Ascending aorta (tissue), 2 donors: ENCODE measurements at regions of chr9 and their contacts with region 1.

Region 1: GRCh38 chr9:34178520-34179212 is at the start of gene UBAP1:
- DNase-seq: peak; percentile 92 to 99
- H3K4me3 ChIP-seq: peak within 1 kb of the TSS; percentile 82 to 83
- H3K27ac ChIP-seq: peak within 1 kb of the TSS; percentile 96 to 97
- H3K4me1 ChIP-seq: peaks cover 0 to 3% of the 10 kb centered on the region in 2 donors
- H3K27me3 ChIP-seq: no peaks in the 10 kb centered on the region
- CTCF ChIP-seq: peak in 1 of 3 experiments; percentile 5
- total RNA-seq, gene UBAP1: 26.0 TPM

Region 2: GRCh38 chr9:33816327-33817252 is 362.1 kb before region 1 on chr9 and contains the start of gene UBE2R2:
- intact Hi-C with region 1: loop called (anchors 10 kb)
- DNase-seq: peak; percentile 68 to 95
- H3K4me3 ChIP-seq: peak within 1 kb of the TSS; percentile 85 to 95
- H3K27ac ChIP-seq: peak within 1 kb of the TSS; percentile 99 to 100
- H3K4me1 ChIP-seq: peaks cover 0 to 25% of the 10 kb centered on the region in 2 donors
- H3K27me3 ChIP-seq: no peaks in the 10 kb centered on the region
- CTCF ChIP-seq: no peak
- total RNA-seq, gene UBE2R2: 7.2 TPM

Region 3: GRCh38 chr9:33988219-33988890 is 190.3 kb before region 1 on chr9:
- intact Hi-C with region 1: no loop called
- DNase-seq: no peak
- H3K4me3 ChIP-seq: no peak overlapping the region
- H3K27ac ChIP-seq: no peak overlapping the region
- H3K4me1 ChIP-seq: no peaks in the 10 kb centered on the region
- H3K27me3 ChIP-seq: no peaks in the 10 kb centered on the region
- CTCF ChIP-seq: no peak

Region 4: GRCh38 chr9:34126207-34127034 is 52.2 kb before region 1 on chr9 and contains the start of gene DCAF12:
- intact Hi-C with region 1: loop called (anchors 2 kb)
- DNase-seq: peak; percentile 31 to 93
- H3K4me3 ChIP-seq: peak within 1 kb of the TSS; percentile 61 to 85
- H3K27ac ChIP-seq: peak within 1 kb of the TSS; percentile 90 to 95
- H3K4me1 ChIP-seq: peaks cover 9 to 12% of the 10 kb centered on the region in 2 donors
- H3K27me3 ChIP-seq: no peaks in the 10 kb centered on the region
- CTCF ChIP-seq: peak in 1 of 3 experiments; percentile 22
- total RNA-seq, gene DCAF12: 27.5 TPM

Region 5: DNA sequence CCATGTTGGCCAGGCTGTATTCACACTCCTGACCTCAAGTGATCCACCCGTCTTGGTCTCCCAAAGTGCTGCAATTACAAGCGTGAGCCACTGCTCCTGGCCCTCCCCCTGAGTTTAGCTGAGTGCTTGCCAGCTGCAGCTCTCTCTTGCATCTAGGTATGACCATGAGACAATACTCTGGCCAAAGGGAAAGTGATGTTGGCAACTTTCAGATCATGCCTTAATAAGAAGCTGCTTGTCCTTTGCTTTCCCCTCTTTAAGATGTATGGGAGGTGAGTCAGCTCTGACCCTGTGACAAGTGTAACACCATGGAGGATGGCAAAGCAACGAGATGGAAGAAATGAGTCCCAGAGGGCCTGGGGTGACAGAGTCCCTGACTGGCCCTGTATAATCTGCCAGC is 33.5 kb before region 1 on chr9:
- intact Hi-C with region 1: no loop called
- DNase-seq: no peak
- H3K4me3 ChIP-seq: no peak overlapping the region
- H3K27ac ChIP-seq: no peak overlapping the region
- H3K4me1 ChIP-seq: no peaks in the 10 kb centered on the region
- H3K27me3 ChIP-seq: no peaks in the 10 kb centered on the region
- CTCF ChIP-seq: no peak

Region 6: GRCh38 chr9:34158362-34158869 is 20.2 kb before region 1 on chr9:
- intact Hi-C with region 1: no loop called
- DNase-seq: no peak
- H3K4me3 ChIP-seq: no peak overlapping the region
- H3K27ac ChIP-seq: no peak overlapping the region
- H3K4me1 ChIP-seq: no peaks in the 10 kb centered on the region
- H3K27me3 ChIP-seq: no peaks in the 10 kb centered on the region
- CTCF ChIP-seq: no peak

Region 7: GRCh38 chr9:34376596-34377403 is 198.1 kb after region 1 on chr9 and contains the start of gene MYORG:
- intact Hi-C with region 1: loop called (anchors 2 kb)
- DNase-seq: peak; percentile 88 to 97
- H3K4me3 ChIP-seq: peak within 1 kb of the TSS; percentile 85 to 86
- H3K27ac ChIP-seq: peak within 1 kb of the TSS; percentile 74 to 78
- H3K4me1 ChIP-seq: peaks cover 7 to 16% of the 10 kb centered on the region in 2 donors
- H3K27me3 ChIP-seq: no peaks in the 10 kb centered on the region
- CTCF ChIP-seq: no peak
- total RNA-seq, gene MYORG: 11.0 TPM

Region 8: GRCh38 chr9:34989003-34989945 is 810.6 kb after region 1 on chr9 and contains the start of gene DNAJB5:
- intact Hi-C with region 1: loop called (anchors 2 kb)
- DNase-seq: peak; percentile 99 to 100
- H3K4me3 ChIP-seq: peak within 1 kb of the TSS; percentile 81 to 100
- H3K27ac ChIP-seq: peak within 1 kb of the TSS; percentile 98 to 100
- H3K4me1 ChIP-seq: peaks cover 13 to 39% of the 10 kb centered on the region in 2 donors
- H3K27me3 ChIP-seq: no peaks in the 10 kb centered on the region
- CTCF ChIP-seq: no peak
- total RNA-seq, gene DNAJB5: 40.8 TPM